ENCODE measurements at regions of chr6 and their contacts with region 1.

Region 1: GRCh38 chr6:149834513-149835481 is 29.4 kb downstream of the LRP11 start:
- DNase-seq: peak; percentile 27 to 52
- ATAC-seq: peak in 1 of 2 experiments; percentile 71; a peak in 3 of 6 replicates
- H3K4me3 ChIP-seq: no peak overlapping the region
- H3K27ac ChIP-seq: no peak overlapping the region
- H3K4me1 ChIP-seq: peaks cover 11% of the 10 kb centered on the region
- CTCF ChIP-seq: peak; percentile 82
- EP300 ChIP-seq: no peak
- POLR2A ChIP-seq: no peak
- RAD21 ChIP-seq: peak; percentile 84 to 85

Region 2: DNA sequence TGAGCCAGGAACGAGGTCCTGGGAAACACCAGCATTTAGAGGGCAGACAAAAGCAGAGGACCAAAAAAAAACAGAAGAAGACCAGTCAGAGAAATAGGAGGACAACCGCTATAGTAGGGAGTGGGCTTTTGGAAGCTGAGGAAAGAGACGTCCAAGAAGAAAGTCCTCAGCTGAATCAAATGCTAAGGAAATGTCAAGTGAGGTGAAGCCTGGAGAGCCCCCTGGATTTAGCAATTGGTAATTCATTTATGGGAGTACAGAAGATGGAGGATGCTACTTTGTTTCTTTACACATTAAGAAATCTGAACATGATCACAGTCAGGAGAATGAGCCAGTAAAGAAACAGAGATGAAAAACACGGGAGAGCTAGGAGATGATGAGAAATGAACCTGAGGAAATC is 11.8 kb before region 1 on chr6:
- CTCF ChIA-PET with region 1: interaction called, 22 read pairs
- POLR2A ChIA-PET with region 1: no interaction called
- DNase-seq: no peak
- ATAC-seq: no peak
- H3K4me3 ChIP-seq: no peak overlapping the region
- H3K27ac ChIP-seq: no peak overlapping the region
- H3K4me1 ChIP-seq: no peaks in the 10 kb centered on the region
- CTCF ChIP-seq: no peak
- EP300 ChIP-seq: no peak
- POLR2A ChIP-seq: no peak
- RAD21 ChIP-seq: no peak

Region 3: DNA sequence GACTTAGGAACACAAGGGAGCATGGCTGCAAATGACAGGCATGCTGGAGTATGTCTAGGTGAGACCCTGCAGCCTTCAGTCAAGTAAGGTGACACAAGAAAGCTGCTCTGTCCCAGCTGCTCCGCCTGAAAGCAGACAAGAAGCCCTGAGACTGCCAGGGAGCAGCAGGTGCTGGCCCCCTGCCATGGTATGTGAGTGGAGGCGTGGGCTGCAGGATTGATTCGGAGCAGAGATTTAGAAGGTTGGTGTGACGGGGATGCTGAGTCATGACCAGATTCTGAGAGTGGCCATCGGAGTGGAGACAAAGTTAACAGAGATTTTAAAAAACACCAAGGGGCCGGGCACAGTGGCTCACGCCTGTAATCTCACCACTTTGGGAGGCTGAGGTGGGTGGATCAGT is 11.5 kb after region 1 on chr6:
- CTCF ChIA-PET with region 1: interaction called, 45 read pairs
- POLR2A ChIA-PET with region 1: no interaction called
- DNase-seq: peak in 1 of 2 experiments; percentile 39
- ATAC-seq: peak in 1 of 2 experiments; percentile 24; a peak in 2 of 6 replicates
- H3K4me3 ChIP-seq: no peak overlapping the region
- H3K27ac ChIP-seq: peak overlapping the region; percentile 61 to 74
- H3K4me1 ChIP-seq: peaks cover 71% of the 10 kb centered on the region
- CTCF ChIP-seq: no peak
- EP300 ChIP-seq: no peak
- POLR2A ChIP-seq: no peak
- RAD21 ChIP-seq: no peak

Region 4: DNA sequence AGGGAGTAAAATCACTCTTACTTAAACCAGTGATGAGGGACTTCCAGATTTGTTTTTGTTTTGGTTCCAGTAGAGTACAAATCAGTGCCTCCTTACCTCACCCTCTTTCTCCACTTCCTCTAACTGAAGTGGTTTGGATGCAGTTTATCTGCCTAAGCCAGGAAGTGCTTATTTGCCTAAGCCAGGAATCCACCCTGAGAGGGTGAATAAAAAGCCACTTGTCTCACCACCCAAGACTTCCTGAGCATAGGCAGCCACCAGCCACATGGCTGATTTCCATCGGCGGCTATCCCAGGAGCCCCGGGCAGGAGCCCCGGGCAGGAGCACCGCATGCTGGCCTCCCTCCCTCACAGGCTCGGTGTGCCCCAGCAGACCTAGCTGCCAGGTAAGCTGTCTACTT is 17.4 kb after region 1 on chr6:
- CTCF ChIA-PET with region 1: interaction called, 45 read pairs
- POLR2A ChIA-PET with region 1: no interaction called
- DNase-seq: no peak
- ATAC-seq: no peak
- H3K4me3 ChIP-seq: no peak overlapping the region
- H3K27ac ChIP-seq: peak overlapping the region; percentile 31 to 91; a peak in 4 of 6 replicates
- H3K4me1 ChIP-seq: peaks cover 81% of the 10 kb centered on the region
- CTCF ChIP-seq: no peak
- EP300 ChIP-seq: no peak
- POLR2A ChIP-seq: no peak
- RAD21 ChIP-seq: no peak

Region 5: DNA sequence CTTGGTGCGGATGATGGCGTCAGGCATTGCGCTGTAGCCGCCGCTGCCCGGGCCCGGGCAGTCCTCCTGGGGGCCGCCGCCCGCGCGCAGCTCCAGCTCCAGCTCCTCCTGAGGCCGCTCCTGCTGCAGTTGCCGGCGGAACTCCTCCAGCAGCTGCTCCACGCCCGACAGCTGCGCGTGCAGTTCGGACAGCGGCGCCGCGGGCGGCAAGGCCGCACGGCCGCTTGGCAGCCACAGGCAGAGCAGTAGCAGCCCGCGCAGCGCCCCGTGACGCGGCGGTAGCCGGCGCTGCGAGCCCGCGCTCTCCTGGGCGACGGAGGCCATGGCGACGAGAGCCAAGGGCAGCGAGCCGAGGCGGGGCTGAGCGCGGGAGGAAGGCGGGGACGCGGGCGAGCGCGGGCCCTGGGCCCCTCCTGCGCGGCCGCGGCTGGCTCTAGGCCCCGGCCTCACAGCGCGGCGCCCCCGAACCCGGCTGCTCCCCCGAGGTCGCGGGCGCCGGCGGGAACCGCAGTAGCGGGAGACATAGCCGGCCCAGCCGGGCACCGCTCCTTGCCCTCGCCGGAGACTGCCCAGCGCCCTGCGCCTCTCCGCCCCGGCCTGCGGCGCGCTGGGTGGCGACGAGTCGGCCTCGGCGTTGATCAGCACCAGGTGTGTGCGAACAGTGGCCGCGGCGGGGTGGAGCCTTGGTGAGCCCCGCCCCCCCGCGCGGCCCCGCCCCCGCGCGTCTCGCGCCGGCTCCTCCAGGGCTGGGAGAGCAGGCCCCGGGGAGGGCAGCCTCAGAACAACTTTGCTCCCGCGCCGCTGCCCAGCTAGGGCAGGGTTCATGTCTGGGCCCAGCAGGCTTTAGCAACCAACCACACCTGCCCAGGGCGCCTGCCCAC is 29.1 kb after region 1 on chr6 and contains the start of gene LRP11:
- CTCF ChIA-PET with region 1: interaction called, 51 read pairs
- POLR2A ChIA-PET with region 1: interaction called, 6 read pairs
- DNase-seq: peak; percentile 82 to 87
- ATAC-seq: peak; percentile 87 to 91
- H3K4me3 ChIP-seq: peak within 1 kb of the TSS; percentile 65
- H3K27ac ChIP-seq: peak within 1 kb of the TSS; percentile 96 to 99
- H3K4me1 ChIP-seq: peaks cover 57% of the 10 kb centered on the region
- CTCF ChIP-seq: no peak
- EP300 ChIP-seq: no peak
- POLR2A ChIP-seq: peak; percentile 61
- RAD21 ChIP-seq: no peak
- polyA plus RNA-seq, gene LRP11: 57.7 and 59.2 TPM in 2 replicates

Region 6: GRCh38 chr6:149903938-149904611 is 69.3 kb after region 1 on chr6:
- CTCF ChIA-PET with region 1: interaction called, 13 read pairs
- POLR2A ChIA-PET with region 1: no interaction called
- DNase-seq: no peak
- ATAC-seq: no peak
- H3K4me3 ChIP-seq: no peak overlapping the region
- H3K27ac ChIP-seq: no peak overlapping the region; a peak in 1 of 6 replicates
- H3K4me1 ChIP-seq: no peaks in the 10 kb centered on the region
- CTCF ChIP-seq: no peak
- EP300 ChIP-seq: no peak
- POLR2A ChIP-seq: no peak
- RAD21 ChIP-seq: no peak

Region 7: GRCh38 chr6:149925974-149926777 is 91.4 kb after region 1 on chr6:
- CTCF ChIA-PET with region 1: interaction called, 28 read pairs
- POLR2A ChIA-PET with region 1: no interaction called
- DNase-seq: peak; percentile 33 to 70
- ATAC-seq: peak; percentile 83 to 89
- H3K4me3 ChIP-seq: peak overlapping the region; percentile 39
- H3K27ac ChIP-seq: peak overlapping the region; percentile 65 to 88
- H3K4me1 ChIP-seq: peaks cover 11% of the 10 kb centered on the region; the same call in 1 of the 3 replicates
- CTCF ChIP-seq: peak; percentile 80
- EP300 ChIP-seq: no peak
- POLR2A ChIP-seq: no peak
- RAD21 ChIP-seq: peak; percentile 92 to 95

Region 8: GRCh38 chr6:149938571-149939355 is 104.0 kb after region 1 on chr6:
- CTCF ChIA-PET with region 1: no interaction called
- POLR2A ChIA-PET with region 1: no interaction called
- DNase-seq: peak in 1 of 2 experiments; percentile 20
- ATAC-seq: peak in 1 of 2 experiments; percentile 9; a peak in 2 of 6 replicates
- H3K4me3 ChIP-seq: peak overlapping the region; percentile 44
- H3K27ac ChIP-seq: peak overlapping the region; percentile 49 to 84; a peak in 5 of 6 replicates
- H3K4me1 ChIP-seq: peaks cover 4% of the 10 kb centered on the region; the same call in 1 of the 3 replicates
- CTCF ChIP-seq: no peak
- EP300 ChIP-seq: no peak
- POLR2A ChIP-seq: no peak
- RAD21 ChIP-seq: no peak

Measured in A549 (cell line).